Esophagus muscularis mucosa (tissue), 4 donors: ENCODE measurements at regions of chr20 and their contacts with region 1.

Region 1: DNA sequence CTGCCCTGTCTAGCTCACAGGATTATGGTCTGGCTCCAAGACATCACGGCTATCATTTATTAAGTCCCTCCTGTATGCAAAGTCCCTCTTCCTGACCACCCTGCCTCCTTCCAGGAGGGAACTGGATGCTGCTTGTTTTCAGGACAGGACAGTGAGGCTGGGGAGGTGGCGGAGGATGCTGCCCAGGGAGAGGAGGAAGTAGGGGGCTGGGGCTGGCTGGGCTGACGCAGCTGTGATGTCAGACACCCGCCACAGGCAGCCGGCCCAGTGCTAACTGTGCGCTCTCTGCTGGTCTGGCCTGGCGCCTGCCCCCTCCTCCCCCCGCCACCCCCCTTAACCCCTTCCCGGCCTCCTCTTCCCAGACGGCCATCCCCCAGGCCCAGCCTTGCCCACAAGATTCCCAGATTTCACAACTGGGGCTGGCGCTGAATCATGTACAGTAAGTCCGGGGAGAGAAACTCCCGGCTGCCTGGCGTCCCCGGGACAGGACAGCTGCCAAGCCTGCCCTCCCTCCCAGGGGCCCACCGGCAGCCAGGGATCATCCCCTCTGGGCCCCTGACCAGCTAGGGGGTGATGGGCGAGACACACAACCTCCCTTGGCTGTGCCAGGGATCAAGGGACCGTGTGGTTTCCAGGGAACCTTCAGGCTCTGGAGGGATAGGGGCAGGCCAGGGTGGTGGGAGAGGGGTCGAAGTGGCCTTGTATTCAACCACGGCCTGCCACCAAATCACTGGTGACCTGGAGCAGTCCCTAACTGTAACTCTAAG is 118.1 kb downstream of the CEBPB start:
- DNase-seq: peak; percentile 99
- H3K4me3 ChIP-seq: peak overlapping the region; percentile 2 to 28 (median 16)
- H3K27ac ChIP-seq: peak overlapping the region; percentile 82 to 89 (median 88)
- H3K4me1 ChIP-seq: peaks cover 59 to 100% (median 88%) of the 10 kb centered on the region in 4 donors
- H3K27me3 ChIP-seq: no peaks in the 10 kb centered on the region
- CTCF ChIP-seq: peak in 1 of 3 experiments; percentile 28
- EP300 ChIP-seq: no peak
- POLR2A ChIP-seq: peak; percentile 65

Region 2: GRCh38 chr20:50198180-50198666 is 110.5 kb before region 1 on chr20:
- intact Hi-C with region 1: no loop called
- DNase-seq: no peak
- H3K4me3 ChIP-seq: no peak overlapping the region
- H3K27ac ChIP-seq: no peak overlapping the region
- H3K4me1 ChIP-seq: peaks cover 13 to 33% (median 29%) of the 10 kb centered on the region in 4 donors
- H3K27me3 ChIP-seq: no peaks in the 10 kb centered on the region
- CTCF ChIP-seq: no peak
- EP300 ChIP-seq: no peak
- POLR2A ChIP-seq: no peak

Region 3: GRCh38 chr20:50366270-50367103 is 57.8 kb after region 1 on chr20:
- intact Hi-C with region 1: no loop called
- DNase-seq: no peak
- H3K4me3 ChIP-seq: no peak overlapping the region
- H3K27ac ChIP-seq: no peak overlapping the region
- H3K4me1 ChIP-seq: peaks cover 0 to 8% (median 6%) of the 10 kb centered on the region in 4 donors
- H3K27me3 ChIP-seq: no peaks in the 10 kb centered on the region
- CTCF ChIP-seq: no peak
- EP300 ChIP-seq: no peak
- POLR2A ChIP-seq: no peak

Region 4: GRCh38 chr20:50395258-50395729 is 86.6 kb after region 1 on chr20:
- intact Hi-C with region 1: loop called (anchors 5 kb)
- DNase-seq: peak; percentile 96
- H3K4me3 ChIP-seq: no peak overlapping the region
- H3K27ac ChIP-seq: peak overlapping the region; percentile 78 to 88 (median 86)
- H3K4me1 ChIP-seq: peaks cover 57 to 69% (median 66%) of the 10 kb centered on the region in 4 donors
- H3K27me3 ChIP-seq: no peaks in the 10 kb centered on the region
- CTCF ChIP-seq: no peak
- EP300 ChIP-seq: peak; percentile 100
- POLR2A ChIP-seq: no peak

Region 5: GRCh38 chr20:50450881-50451752 is 142.4 kb after region 1 on chr20:
- intact Hi-C with region 1: loop called (anchors 10 kb)
- DNase-seq: no peak
- H3K4me3 ChIP-seq: peak overlapping the region in 2 of 4 donors; percentile 7 to 27
- H3K27ac ChIP-seq: peak overlapping the region; percentile 25 to 48 (median 27)
- H3K4me1 ChIP-seq: peaks cover 11 to 25% (median 20%) of the 10 kb centered on the region in 4 donors
- H3K27me3 ChIP-seq: peaks cover 0 to 4% (median 0%) of the 10 kb centered on the region in 4 donors
- CTCF ChIP-seq: no peak
- EP300 ChIP-seq: no peak
- POLR2A ChIP-seq: no peak

Region 6: DNA sequence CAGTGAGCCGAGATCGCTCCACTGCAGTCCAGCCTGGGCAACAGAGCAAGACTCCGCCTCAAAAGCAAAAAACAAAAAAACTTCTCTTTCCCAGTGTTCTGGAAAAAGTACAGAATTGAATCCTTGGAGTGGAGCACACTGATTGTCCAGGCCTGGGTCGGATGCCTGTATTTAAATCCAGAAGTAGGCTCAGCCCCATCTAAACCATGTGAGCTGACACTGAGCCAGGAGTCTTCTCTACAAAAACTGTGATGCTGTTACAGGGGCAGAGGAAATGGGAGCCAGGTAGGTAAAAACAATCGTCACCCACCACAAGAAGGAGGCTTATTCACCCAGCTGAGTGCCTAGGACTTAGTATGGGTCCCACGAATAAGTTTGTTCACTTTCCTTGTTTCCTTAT is 158.5 kb after region 1 on chr20:
- intact Hi-C with region 1: no loop called
- DNase-seq: no peak
- H3K4me3 ChIP-seq: no peak overlapping the region
- H3K27ac ChIP-seq: no peak overlapping the region
- H3K4me1 ChIP-seq: peaks cover 7 to 26% (median 17%) of the 10 kb centered on the region in 4 donors
- H3K27me3 ChIP-seq: no peaks in the 10 kb centered on the region
- CTCF ChIP-seq: no peak
- EP300 ChIP-seq: no peak
- POLR2A ChIP-seq: no peak